Activated B cell treated with CpG ODN at 0.5 μM for 24 hours (primary cell): ENCODE measurements at regions of chr7 and their contacts with region 1.

Region 1: DNA sequence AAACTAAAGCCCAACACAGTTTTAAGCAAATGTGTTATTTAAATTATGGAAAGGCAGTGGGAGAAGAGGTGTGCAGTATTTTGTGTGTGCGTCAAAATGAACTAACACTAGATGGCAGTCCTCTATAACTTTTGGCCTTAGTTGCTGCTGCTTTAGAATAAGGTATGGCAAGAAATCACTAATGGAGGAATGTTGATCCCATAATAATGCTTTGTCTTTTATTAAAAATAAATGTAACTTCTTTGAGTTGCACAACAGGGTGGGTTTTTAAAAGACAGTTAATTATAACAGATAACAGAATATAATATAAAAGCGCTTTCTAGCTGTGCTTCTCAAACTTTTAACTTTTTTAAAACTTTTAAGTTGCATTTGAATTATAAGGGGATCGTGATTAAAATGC is 56.4 kb downstream of the BBS9 start:
- DNase-seq: no peak
- ATAC-seq: no peak
- H3K4me3 Mint-ChIP-seq: no peak overlapping the region
- H3K27ac Mint-ChIP-seq: no peak overlapping the region
- H3K4me1 Mint-ChIP-seq: peaks cover 6% of the 10 kb centered on the region
- H3K27me3 Mint-ChIP-seq: no peaks in the 10 kb centered on the region
- CTCF ChIP-seq: no peak

Region 2: GRCh38 chr7:33757562-33758165 is 571.9 kb after region 1 on chr7:
- CTCF ChIA-PET with region 1: no interaction called
- POLR2A ChIA-PET with region 1: no interaction called
- intact Hi-C with region 1: loop called (anchors 1 kb)
- DNase-seq: no peak
- ATAC-seq: no peak
- H3K4me3 Mint-ChIP-seq: no peak overlapping the region
- H3K27ac Mint-ChIP-seq: no peak overlapping the region
- H3K4me1 Mint-ChIP-seq: no peaks in the 10 kb centered on the region
- H3K27me3 Mint-ChIP-seq: peaks cover 10% of the 10 kb centered on the region
- CTCF ChIP-seq: no peak

Region 3: GRCh38 chr7:33895025-33895804 is 709.4 kb after region 1 on chr7:
- CTCF ChIA-PET with region 1: interaction called, 8 read pairs
- POLR2A ChIA-PET with region 1: no interaction called
- intact Hi-C with region 1: loop called (anchors 1 kb)
- DNase-seq: peak; percentile 51
- ATAC-seq: peak; percentile 82
- H3K4me3 Mint-ChIP-seq: no peak overlapping the region
- H3K27ac Mint-ChIP-seq: no peak overlapping the region
- H3K4me1 Mint-ChIP-seq: peaks cover 3% of the 10 kb centered on the region
- H3K27me3 Mint-ChIP-seq: peaks cover 45% of the 10 kb centered on the region
- CTCF ChIP-seq: no peak

Region 4: DNA sequence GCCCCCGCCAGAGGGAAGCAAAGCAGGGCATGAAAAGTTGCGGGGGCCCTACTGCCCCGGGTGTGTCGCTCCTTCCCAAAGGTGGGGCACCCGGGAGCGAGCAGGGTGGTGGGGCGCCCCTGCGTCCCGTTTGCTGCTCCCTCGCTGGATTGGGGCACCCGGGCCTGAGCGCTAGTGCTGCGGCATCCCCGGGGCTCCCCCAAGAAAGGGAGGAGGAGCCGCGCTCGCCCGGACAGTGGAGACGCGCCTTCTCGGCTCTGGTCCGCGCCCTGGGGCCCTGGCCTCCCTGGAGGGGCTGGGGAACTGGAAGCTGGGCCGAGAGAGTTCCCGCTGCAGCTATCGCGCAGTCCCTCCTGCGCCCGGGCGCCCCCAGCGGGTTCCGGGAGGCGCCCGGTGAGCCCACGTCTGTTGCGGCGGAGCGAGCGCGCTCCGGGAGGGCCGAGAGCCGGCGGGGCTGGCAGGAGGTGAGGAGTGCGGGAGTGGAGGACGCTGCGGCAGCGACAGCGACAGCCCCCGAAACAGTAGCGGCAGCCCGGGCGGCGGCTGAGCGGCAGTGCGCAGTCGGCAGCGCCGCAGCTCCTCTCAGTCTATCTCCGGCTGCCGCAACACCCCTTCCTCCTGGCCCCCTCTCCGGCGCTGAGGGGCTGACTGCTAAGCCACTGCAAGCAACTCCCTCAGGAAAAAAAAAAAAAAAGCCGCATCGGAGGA is 719.0 kb after region 1 on chr7:
- CTCF ChIA-PET with region 1: no interaction called
- POLR2A ChIA-PET with region 1: interaction called, 12 read pairs
- intact Hi-C with region 1: no loop called
- DNase-seq: peak; percentile 17
- ATAC-seq: peak; percentile 42
- H3K4me3 Mint-ChIP-seq: peak overlapping the region; percentile 75
- H3K27ac Mint-ChIP-seq: no peak overlapping the region
- H3K4me1 Mint-ChIP-seq: peaks cover 15% of the 10 kb centered on the region
- H3K27me3 Mint-ChIP-seq: peaks cover 56% of the 10 kb centered on the region
- CTCF ChIP-seq: no peak

Region 5: DNA sequence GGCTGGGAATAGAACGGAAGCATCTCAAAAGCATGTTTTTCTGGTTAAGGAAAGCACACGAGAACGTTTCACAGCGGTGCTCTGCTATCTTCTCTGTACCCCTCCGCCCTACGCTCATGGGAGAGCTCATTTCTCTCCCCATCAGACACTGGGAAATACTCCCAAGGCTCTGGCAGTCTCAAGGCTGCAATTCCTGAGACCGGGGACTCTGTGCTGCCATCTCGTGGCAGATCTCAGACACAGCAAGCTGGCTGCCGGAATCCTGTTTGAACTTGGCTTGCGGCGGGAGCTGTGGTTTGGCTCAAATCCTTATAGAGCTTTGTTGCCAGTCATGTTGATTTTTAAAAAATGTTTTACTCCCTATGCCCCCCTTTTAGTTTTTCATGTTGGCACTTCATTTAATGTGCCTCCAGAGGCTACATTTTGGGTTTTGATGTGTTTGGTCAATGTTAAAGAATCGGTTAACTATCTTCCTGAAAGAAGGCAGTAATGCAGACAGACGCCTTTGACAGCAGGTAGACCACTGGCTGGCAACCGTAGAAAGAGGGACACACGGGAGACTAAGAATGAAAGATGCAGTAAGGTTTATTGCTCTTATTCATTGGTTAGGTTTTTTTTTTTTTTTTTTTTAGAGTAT is 747.2 kb after region 1 on chr7:
- CTCF ChIA-PET with region 1: interaction called, 57 read pairs
- POLR2A ChIA-PET with region 1: no interaction called
- intact Hi-C with region 1: loop called (anchors 1 kb)
- DNase-seq: peak; percentile 37
- ATAC-seq: peak; percentile 42
- H3K4me3 Mint-ChIP-seq: no peak overlapping the region
- H3K27ac Mint-ChIP-seq: no peak overlapping the region
- H3K4me1 Mint-ChIP-seq: no peaks in the 10 kb centered on the region
- H3K27me3 Mint-ChIP-seq: peaks cover 8% of the 10 kb centered on the region
- CTCF ChIP-seq: peak; percentile 36

Region 6: GRCh38 chr7:34087892-34088891 is 902.4 kb after region 1 on chr7:
- CTCF ChIA-PET with region 1: no interaction called
- POLR2A ChIA-PET with region 1: no interaction called
- intact Hi-C with region 1: loop called (anchors 10 kb)
- DNase-seq: no peak
- ATAC-seq: no peak
- H3K4me3 Mint-ChIP-seq: no peak overlapping the region
- H3K27ac Mint-ChIP-seq: no peak overlapping the region
- H3K4me1 Mint-ChIP-seq: no peaks in the 10 kb centered on the region
- H3K27me3 Mint-ChIP-seq: no peaks in the 10 kb centered on the region
- CTCF ChIP-seq: no peak